ENCODE measurements at regions of chr11 and their contacts with region 1.

Region 1: DNA sequence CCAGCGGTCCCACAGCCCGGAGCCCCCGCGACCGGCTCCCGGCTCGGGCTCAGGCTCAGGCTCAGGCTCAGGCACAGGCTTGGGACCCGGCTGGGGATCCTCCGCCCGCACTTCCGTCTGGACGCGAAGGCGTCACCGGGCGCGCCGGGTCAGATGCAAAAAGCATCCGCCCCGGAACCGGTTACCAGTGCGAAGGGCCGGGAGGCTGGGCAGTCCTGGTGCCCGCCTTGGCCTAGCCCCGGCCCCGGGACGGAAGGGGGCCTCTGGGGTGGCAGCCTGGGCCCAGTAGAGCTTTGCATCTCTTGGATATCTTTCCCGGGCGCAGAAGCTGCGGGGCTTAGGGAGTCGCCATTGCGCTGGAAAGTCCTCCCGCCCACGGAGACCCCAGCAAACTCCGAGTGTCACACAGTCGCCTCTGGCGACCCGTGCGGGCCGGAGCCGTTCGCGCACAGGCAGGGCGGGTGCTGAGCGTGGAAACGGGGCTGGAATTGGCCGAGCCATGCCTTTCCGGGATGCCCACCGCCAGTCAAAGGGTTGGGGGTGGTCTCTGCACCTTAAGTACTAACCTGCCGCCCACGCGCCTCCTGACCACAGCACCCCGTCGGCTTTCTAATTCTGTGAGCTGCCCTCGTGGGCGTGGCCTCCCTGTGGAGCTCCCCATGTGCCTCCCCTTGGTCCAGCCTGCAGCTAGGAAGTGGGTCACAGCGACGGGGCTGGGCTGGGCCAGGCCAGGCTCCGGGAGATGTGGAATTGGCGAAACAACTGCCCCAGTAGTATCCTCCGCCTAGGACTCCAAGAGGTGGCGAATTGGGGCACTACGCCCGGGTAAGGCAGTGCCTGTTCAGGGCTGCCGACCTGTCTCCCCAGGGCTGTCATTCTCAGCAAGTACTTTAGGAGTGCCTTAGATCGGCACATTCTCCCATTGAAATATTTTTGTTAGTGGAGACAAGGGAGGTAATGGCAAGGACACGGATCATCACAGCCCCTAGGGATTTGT is at the start of gene TMEM9B:
- H3K4me3 Mint-ChIP-seq: peak within 1 kb of the TSS; percentile 100
- H3K27ac Mint-ChIP-seq: peak within 1 kb of the TSS; percentile 95
- H3K4me1 Mint-ChIP-seq: peaks cover 45% of the 10 kb centered on the region
- H3K27me3 Mint-ChIP-seq: no peaks in the 10 kb centered on the region

Region 2: GRCh38 chr11:8225589-8226036 is 739.0 kb before region 1 on chr11:
- intact Hi-C with region 1: loop called (anchors 10 kb)
- H3K4me3 Mint-ChIP-seq: no peak overlapping the region
- H3K27ac Mint-ChIP-seq: no peak overlapping the region
- H3K4me1 Mint-ChIP-seq: peaks cover 10% of the 10 kb centered on the region
- H3K27me3 Mint-ChIP-seq: peaks cover 7% of the 10 kb centered on the region

Region 3: DNA sequence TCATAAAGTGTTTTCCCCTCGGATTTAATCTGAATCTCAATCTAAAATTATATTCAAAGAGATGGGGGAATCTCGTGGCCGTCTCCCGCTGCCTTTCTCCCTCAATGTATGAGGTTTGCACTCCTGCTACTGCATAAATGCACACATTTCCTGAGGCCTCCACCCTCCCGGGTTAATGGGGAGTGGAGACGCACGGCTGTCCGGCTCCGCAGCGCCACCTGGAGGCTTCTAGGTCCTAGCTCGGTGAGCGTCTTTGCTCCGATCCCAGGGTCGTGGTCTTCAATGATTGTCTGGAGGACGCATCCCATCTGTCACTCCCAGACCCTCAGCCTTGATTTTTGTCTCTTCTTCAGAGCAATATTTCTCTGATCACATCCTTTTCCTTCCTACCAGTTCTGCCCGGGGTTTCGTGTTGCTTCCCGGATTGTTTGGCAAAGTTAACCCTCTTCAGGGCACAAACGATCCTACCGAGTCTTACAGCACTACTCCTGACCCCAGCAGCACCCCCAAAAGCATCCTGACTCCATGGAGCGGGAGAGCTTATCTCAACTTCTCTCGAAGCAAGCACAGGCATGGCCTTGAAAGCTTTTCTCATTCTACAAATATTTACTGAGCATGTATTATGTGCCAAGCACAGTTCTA is 700.7 kb before region 1 on chr11 and contains the start of gene LMO1:
- intact Hi-C with region 1: no loop called
- H3K4me3 Mint-ChIP-seq: peak within 1 kb of the TSS; percentile 63
- H3K27ac Mint-ChIP-seq: no peak within 1 kb of the TSS
- H3K4me1 Mint-ChIP-seq: peaks cover 17% of the 10 kb centered on the region
- H3K27me3 Mint-ChIP-seq: peaks cover 92% of the 10 kb centered on the region

Region 4: GRCh38 chr11:8688414-8689362 is 275.9 kb before region 1 on chr11:
- intact Hi-C with region 1: loop called (anchors 2 kb)
- H3K4me3 Mint-ChIP-seq: peak overlapping the region; percentile 93
- H3K27ac Mint-ChIP-seq: peak overlapping the region; percentile 87
- H3K4me1 Mint-ChIP-seq: peaks cover 39% of the 10 kb centered on the region
- H3K27me3 Mint-ChIP-seq: no peaks in the 10 kb centered on the region

Region 5: DNA sequence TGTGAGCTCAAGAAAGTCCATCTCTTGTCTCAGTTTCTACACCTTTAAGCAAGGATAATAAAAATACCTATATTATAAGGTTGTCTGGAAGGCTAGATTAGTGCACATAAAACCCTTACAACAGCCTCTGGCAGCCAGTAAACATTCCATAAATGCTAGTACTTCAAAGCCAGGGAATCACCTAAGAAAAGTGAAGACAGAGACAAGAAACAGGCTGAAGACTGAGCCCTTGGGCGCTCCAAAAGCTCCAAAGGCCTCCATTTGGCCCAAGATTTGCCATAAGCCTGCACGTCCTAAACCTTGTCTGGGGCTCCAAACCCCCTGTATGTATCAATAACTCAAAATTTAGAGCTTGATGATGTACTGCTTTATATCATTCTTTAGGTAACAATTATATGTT is 105.8 kb before region 1 on chr11:
- intact Hi-C with region 1: no loop called
- H3K4me3 Mint-ChIP-seq: no peak overlapping the region
- H3K27ac Mint-ChIP-seq: no peak overlapping the region
- H3K4me1 Mint-ChIP-seq: no peaks in the 10 kb centered on the region
- H3K27me3 Mint-ChIP-seq: peaks cover 7% of the 10 kb centered on the region

Region 6: DNA sequence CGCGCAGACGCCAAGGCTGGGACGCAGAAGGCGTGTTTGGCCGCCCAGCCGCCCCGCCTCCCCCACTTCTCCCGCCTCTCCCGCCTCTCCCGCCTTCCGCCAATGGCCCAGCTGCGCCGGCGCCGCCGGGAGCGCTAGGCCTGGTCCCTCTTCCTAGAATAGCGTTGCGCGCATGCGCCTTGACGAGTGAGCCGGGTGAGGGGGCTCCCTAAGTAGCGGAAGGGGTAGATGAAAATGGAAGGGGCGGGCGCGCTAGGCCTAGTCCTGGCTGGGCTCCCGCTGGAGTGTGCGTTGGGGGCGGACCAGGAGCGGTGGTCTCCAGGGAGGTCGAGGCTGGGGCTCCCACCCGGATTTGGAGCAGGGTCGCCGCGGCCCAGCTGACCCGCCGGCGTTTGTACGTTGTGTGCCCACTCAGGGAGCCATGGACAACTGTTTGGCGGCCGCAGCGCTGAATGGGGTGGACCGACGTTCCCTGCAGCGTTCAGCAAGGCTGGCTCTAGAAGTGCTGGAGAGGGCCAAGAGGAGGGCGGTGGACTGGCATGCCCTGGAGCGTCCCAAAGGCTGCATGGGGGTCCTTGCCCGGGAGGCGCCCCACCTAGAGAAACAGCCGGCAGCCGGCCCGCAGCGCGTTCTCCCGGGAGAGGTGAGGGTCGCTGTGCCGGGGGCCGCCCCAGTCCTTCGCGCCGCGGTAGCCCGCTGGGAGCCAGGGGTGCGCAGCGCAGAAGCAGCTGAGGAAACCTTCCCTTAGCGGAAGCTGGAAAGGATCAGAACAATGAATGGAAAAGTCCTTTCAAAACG is 53.4 kb before region 1 on chr11 and contains the start of gene AKIP1:
- intact Hi-C with region 1: loop called (anchors 5 kb)
- H3K4me3 Mint-ChIP-seq: peak within 1 kb of the TSS; percentile 95
- H3K27ac Mint-ChIP-seq: peak within 1 kb of the TSS; percentile 92
- H3K4me1 Mint-ChIP-seq: peaks cover 47% of the 10 kb centered on the region
- H3K27me3 Mint-ChIP-seq: peaks cover 13% of the 10 kb centered on the region

Region 7: DNA sequence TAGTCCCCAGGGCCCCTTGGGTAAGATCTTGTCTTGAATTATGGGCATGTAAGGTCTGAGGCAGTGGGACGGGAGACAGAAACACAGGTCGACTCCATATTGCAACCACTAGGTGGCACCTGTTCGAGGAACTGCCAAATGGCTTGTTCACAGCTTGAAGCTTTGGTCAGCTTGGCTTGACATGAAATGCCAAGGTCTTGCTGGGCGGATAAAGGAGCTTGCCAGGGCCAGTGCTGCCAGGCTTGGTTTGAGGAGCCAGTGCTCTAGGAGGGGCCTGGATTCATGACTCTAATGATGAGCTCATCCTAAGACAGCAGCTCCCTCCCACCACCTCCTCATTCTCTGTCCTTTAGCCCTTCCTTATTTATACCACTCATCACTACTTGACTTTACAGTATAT is 51.1 kb after region 1 on chr11:
- intact Hi-C with region 1: loop called (anchors 5 kb)
- H3K4me3 Mint-ChIP-seq: no peak overlapping the region
- H3K27ac Mint-ChIP-seq: no peak overlapping the region
- H3K4me1 Mint-ChIP-seq: peaks cover 32% of the 10 kb centered on the region
- H3K27me3 Mint-ChIP-seq: peaks cover 4% of the 10 kb centered on the region

Region 8: GRCh38 chr11:10019906-10020682 is 1055.5 kb after region 1 on chr11:
- intact Hi-C with region 1: no loop called
- H3K4me3 Mint-ChIP-seq: no peak overlapping the region
- H3K27ac Mint-ChIP-seq: no peak overlapping the region
- H3K4me1 Mint-ChIP-seq: peaks cover 28% of the 10 kb centered on the region
- H3K27me3 Mint-ChIP-seq: no peaks in the 10 kb centered on the region